ENCODE measurements at regions of chr6 and their contacts with region 1.

Region 1: DNA sequence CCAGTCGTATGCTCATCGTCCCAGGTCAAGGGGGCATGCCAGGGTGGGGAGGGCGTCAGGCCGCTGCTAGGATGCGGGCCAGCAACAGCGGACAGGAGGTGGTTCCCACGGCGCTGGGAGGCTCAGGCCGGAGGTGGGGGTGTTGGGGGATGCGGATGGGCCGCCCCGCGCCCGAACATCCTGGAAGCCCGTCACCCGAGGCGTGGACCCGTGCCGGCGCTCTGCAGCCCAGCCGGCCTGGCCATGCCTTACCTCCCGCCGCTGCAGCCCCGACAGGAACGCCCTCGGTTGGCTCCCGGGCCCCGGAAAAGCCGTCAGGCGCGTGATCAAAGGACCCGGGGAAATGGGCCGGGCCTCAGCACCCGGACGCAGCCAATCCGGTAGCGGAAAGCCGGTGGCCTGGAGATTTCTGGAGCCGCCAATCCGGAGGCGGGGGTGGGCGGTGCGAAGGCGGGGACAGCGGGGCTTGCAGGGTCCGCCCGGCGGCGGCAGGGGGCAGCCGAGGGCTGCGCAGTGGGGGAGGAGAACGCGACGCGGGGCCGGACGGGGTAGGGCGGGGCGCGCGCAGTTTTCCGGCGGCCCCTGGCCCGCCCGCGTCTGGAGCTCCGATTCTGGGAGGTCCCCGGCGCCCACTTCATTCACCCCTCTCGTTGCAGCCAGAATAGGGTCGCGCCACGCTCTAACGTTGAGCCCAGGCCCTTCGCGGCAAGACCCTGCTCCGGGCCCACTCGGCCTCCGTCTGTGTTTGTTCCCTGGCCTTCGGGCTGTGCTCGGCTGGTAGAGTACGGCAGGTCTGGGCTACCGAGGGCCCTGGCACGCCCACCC is at the start of gene SMIM29:
- DNase-seq: peak; percentile 97
- ATAC-seq: peak; percentile 85 to 97 (median 90)
- H3K4me3 ChIP-seq: peak within 1 kb of the TSS; percentile 94
- H3K4me3 Mint-ChIP-seq: peak within 1 kb of the TSS; percentile 95
- H3K27ac ChIP-seq: peak within 1 kb of the TSS; percentile 96
- H3K27ac Mint-ChIP-seq: peak within 1 kb of the TSS; percentile 94 to 97
- H3K4me1 ChIP-seq: peaks cover 28% of the 10 kb centered on the region
- H3K4me1 Mint-ChIP-seq: peaks cover 6 to 35% of the 10 kb centered on the region in 2 donors
- H3K27me3 ChIP-seq: no peaks in the 10 kb centered on the region
- H3K27me3 Mint-ChIP-seq: no peaks in the 10 kb centered on the region
- CTCF ChIP-seq: peak; percentile 94
- total RNA-seq, gene SMIM29: 30.8 to 48.0 (median 39.7) TPM

Region 2: DNA sequence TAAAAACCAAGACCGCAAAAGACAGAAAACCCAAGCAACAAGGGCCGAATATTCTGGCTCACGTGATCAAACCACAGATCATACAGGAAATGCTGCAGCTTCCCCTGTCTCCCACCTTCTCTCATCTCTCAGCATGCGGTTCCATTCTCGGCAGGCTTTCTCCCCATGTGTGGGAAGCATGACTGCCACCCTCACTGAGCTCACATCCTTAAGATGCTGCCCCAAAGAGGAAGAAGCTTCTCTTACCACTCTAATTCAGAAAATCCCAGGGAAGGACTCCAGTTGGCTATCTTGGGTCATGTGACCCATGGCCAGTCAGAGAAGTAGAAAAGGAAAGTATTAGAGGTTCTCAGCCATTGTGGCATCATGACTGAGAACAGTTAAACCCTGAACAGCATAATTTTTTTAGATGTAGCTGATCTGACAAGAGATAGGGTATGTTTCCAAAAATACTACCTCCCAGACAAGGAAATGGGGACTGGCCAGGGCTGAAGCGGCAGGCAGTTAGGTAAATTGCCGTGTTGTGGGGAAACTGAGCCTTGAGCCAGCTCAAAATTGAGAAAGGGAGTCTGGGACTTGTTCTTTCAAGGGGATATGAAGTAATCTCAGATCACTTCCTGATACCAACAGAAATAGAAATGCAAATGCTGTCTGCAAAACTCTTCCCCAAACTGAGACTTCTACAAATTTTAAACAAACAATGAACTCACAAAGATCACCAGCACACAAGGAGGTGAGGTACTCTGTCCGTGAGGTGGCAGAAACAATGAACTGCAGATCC is 66.0 kb before region 1 on chr6:
- intact Hi-C with region 1: loop called (anchors 5 kb)
- DNase-seq: peak; percentile 55 to 92
- ATAC-seq: peak; percentile 89 to 95 (median 92)
- H3K4me3 ChIP-seq: no peak overlapping the region
- H3K4me3 Mint-ChIP-seq: peak overlapping the region; percentile 70
- H3K27ac ChIP-seq: peak overlapping the region; percentile 86
- H3K27ac Mint-ChIP-seq: peak overlapping the region; percentile 45 to 93
- H3K4me1 ChIP-seq: peaks cover 21% of the 10 kb centered on the region
- H3K4me1 Mint-ChIP-seq: peaks cover 18 to 19% of the 10 kb centered on the region in 2 donors
- H3K27me3 ChIP-seq: no peaks in the 10 kb centered on the region
- H3K27me3 Mint-ChIP-seq: peaks cover 0 to 7% of the 10 kb centered on the region in 2 donors
- CTCF ChIP-seq: no peak

Region 3: DNA sequence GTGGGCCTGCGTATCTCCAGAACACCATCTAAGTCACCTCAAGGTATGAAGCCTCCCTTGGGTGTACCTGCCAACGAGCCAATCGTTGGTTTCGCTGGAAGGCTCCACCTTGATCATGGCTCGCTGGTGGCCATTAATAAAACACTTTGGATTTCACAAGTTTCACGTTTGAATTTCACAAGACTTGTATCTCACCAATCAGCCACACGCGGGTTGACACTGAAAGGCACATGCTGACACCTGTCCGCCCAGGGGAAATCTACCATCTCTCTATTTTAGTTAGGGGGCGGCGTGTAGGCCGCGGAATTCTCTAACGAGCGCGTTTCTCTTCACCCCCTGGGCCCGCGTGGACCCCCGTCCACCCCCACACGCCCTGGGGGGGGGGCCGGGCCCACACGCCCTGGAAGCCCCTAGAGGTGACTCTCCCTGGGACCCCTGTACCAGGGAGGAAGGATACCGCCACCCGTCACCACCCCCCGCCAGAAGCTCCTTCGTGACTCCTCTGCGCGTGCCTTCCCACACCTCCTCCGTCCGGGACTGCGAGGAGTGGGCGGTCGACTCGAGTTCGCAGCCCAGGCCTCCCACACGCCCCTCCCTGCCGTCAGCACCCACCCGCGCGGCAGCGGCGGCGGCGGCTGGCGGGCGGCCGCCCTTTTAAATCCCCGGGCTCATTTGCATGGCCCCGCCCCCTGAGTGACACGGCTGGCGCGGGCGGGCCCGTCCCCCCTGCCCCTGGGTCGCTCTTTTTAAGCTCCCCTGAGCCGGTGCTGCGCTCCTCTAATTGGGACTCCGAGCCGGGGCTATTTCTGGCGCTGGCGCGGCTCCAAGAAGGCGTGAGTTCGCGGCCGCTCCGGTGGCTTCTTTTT is 12.6 kb before region 1 on chr6 and contains the start of gene HMGA1:
- intact Hi-C with region 1: loop called (anchors 1 kb)
- DNase-seq: peak; percentile 89 to 95
- ATAC-seq: peak; percentile 66 to 85 (median 77)
- H3K4me3 ChIP-seq: peak within 1 kb of the TSS; percentile 77
- H3K4me3 Mint-ChIP-seq: peak within 1 kb of the TSS; percentile 91
- H3K27ac ChIP-seq: peak within 1 kb of the TSS; percentile 99
- H3K27ac Mint-ChIP-seq: peak within 1 kb of the TSS; percentile 96 to 97
- H3K4me1 ChIP-seq: peaks cover 23% of the 10 kb centered on the region
- H3K4me1 Mint-ChIP-seq: peaks cover 20 to 21% of the 10 kb centered on the region in 2 donors
- H3K27me3 ChIP-seq: no peaks in the 10 kb centered on the region
- H3K27me3 Mint-ChIP-seq: no peaks in the 10 kb centered on the region
- CTCF ChIP-seq: no peak
- total RNA-seq, gene HMGA1: 63.1 to 84.2 (median 77.3) TPM

Region 4: DNA sequence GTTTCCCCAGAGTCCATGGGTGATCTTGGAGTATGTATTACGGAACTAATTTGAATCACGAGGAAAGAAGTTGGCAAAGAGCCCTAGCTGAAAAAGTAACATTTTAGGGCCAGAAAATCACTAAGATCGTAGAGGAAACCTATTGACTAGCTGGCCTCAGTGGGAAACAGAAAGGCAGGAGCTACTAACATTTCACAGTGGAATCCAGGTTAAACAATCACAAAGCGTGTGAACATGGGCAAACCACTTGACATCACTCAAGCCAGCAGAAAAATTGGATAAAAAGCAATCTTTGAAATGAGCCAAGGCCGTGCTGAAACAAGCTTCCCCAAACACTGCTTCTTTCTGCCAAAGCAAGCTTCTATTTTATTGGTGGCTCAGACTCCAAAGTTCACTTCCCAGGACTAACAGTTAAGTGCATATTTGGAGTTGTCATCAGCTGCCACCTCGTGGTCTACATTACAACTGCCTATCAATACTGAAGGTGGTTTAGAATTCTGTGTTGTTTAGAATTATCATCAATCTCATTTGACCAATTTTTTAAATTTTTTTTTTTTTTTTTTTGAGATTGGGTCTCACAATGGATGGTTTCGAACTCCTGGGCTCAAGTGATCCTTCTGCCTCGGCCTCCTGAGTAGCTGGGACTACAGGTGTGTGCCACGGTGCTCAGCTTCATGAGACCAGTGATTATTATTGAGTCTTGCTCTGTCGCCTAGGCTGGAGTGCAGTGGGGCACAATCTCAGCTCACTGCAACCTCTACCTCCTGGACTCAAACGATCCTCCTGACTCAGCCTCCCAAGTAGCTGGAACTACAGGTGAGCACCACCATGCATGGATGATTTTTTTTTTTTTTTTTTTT is 166.3 kb after region 1 on chr6:
- intact Hi-C with region 1: loop called (anchors 2 kb)
- DNase-seq: peak in 1 of 2 donors; percentile 74
- ATAC-seq: peak; percentile 67 to 77 (median 77)
- H3K4me3 ChIP-seq: no peak overlapping the region
- H3K4me3 Mint-ChIP-seq: no peak overlapping the region
- H3K27ac ChIP-seq: no peak overlapping the region
- H3K27ac Mint-ChIP-seq: peak overlapping the region in 1 of 2 donors; percentile 44
- H3K4me1 ChIP-seq: no peaks in the 10 kb centered on the region
- H3K4me1 Mint-ChIP-seq: peaks cover 16 to 18% of the 10 kb centered on the region in 2 donors
- H3K27me3 ChIP-seq: no peaks in the 10 kb centered on the region
- H3K27me3 Mint-ChIP-seq: no peaks in the 10 kb centered on the region
- CTCF ChIP-seq: peak; percentile 48

Region 5: GRCh38 chr6:34526992-34527728 is 278.2 kb after region 1 on chr6:
- intact Hi-C with region 1: loop called (anchors 5 kb)
- DNase-seq: peak; percentile 93 to 97
- ATAC-seq: peak; percentile 96 to 99 (median 98)
- H3K4me3 ChIP-seq: peak overlapping the region; percentile 5
- H3K4me3 Mint-ChIP-seq: peak overlapping the region; percentile 73
- H3K27ac ChIP-seq: peak overlapping the region; percentile 2
- H3K27ac Mint-ChIP-seq: peak overlapping the region in 1 of 2 donors; percentile 30
- H3K4me1 ChIP-seq: peaks cover 42% of the 10 kb centered on the region
- H3K4me1 Mint-ChIP-seq: peaks cover 20 to 21% of the 10 kb centered on the region in 2 donors
- H3K27me3 ChIP-seq: no peaks in the 10 kb centered on the region
- H3K27me3 Mint-ChIP-seq: no peaks in the 10 kb centered on the region
- CTCF ChIP-seq: peak; percentile 72

Region 6: GRCh38 chr6:34608321-34609091 is 359.6 kb after region 1 on chr6:
- intact Hi-C with region 1: loop called (anchors 1 kb)
- DNase-seq: no peak
- ATAC-seq: no peak
- H3K4me3 ChIP-seq: no peak overlapping the region
- H3K4me3 Mint-ChIP-seq: no peak overlapping the region
- H3K27ac ChIP-seq: no peak overlapping the region
- H3K27ac Mint-ChIP-seq: peak overlapping the region in 1 of 2 donors; percentile 29
- H3K4me1 ChIP-seq: no peaks in the 10 kb centered on the region
- H3K4me1 Mint-ChIP-seq: peaks cover 17 to 31% of the 10 kb centered on the region in 2 donors
- H3K27me3 ChIP-seq: no peaks in the 10 kb centered on the region
- H3K27me3 Mint-ChIP-seq: no peaks in the 10 kb centered on the region
- CTCF ChIP-seq: no peak

Measured in natural killer cell (primary cell).